Mucosa of descending colon (tissue), 3 donors: ENCODE measurements at regions of chr3 and their contacts with region 1.

Region 1: DNA sequence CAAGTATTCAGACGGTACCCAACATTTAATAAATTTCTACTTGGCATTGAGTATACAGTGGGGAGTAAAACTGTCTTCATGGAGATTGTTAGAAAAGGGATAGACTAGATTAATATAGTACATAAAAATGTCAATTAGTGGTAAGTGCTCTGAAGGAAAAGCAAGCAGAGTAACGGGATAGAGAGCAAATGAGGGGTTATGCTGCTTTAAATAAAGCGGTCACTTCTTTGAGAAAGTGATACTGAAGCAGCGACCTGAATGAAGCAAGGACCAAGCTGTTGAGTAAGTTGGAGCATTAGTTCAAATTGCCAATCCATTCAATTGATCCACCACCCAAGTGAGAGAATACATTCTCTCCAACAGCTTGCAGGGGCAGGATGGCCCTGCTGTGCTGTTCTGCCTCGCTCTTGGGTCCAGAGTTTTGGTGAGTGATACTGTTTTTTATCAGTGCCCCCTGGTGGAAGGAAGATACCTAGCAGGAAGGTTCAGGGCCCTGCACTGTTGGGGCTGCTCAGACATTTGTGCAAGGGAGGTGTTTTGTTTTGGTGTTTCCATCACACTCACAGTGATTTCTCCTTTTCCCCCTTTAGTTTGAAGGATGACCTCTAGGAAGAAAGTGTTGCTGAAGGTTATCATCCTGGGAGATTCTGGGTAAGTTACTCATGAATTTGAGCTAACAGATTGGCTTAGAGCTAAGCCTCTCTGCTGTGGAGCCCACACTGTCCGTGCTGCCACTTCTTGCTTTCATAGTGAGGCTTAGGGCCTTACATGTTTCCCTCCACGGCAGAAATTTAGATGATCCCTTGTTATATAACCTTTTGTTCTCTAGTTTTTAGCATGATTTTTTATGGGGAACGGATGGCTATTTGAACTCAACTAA is 69.0 kb downstream of the RAB7A start:
- DNase-seq: peak in 2 of 3 donors; percentile 45 to 81
- ATAC-seq: peak; percentile 98
- H3K4me3 ChIP-seq: no peak overlapping the region
- H3K4me1 ChIP-seq: peaks cover 12% of the 10 kb centered on the region
- CTCF ChIP-seq: peak; percentile 79

Region 2: DNA sequence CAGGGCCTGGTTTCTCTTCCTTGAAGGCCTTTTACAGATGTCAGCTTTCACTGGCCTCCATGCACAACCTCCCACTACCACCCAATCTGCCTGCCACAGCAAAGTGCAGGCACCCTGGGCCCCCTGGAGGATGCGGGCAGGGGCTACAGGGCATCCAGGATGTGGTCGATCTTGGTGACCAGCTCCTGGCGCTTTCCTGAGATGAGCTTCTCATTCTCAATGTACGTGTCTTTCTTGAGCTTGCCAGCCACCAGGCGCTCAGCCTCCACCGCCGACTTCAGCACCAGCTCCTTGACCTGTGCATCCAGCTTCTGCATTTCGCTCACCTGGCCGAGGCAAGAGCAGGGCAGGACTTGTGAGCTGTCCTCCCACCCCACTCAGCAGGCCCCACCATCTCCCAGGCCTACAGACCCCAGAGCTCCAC is 174.7 kb before region 1 on chr3:
- intact Hi-C with region 1: loop called in 1 of 2 experiments (anchors 10 kb)
- DNase-seq: no peak
- ATAC-seq: no peak
- H3K4me3 ChIP-seq: no peak overlapping the region
- H3K4me1 ChIP-seq: peaks cover 12% of the 10 kb centered on the region
- CTCF ChIP-seq: no peak